K562 (cell line): ENCODE measurements at regions of chr9 and their contacts with region 1.

Region 1: GRCh38 chr9:109903515-109904138 is 123.6 kb downstream of the PALM2AKAP2 start:
- DNase-seq: peak; percentile 50 to 68 (median 64)
- ATAC-seq: peak; percentile 93
- H3K4me3 ChIP-seq: no peak overlapping the region
- H3K27ac ChIP-seq: no peak overlapping the region
- H3K4me1 ChIP-seq: no peaks in the 10 kb centered on the region
- H3K27me3 ChIP-seq: no peaks in the 10 kb centered on the region
- CTCF ChIP-seq: peak; percentile 65 to 80 (median 72)
- EP300 ChIP-seq: no peak
- POLR2A ChIP-seq: no peak
- RAD21 ChIP-seq: peak; percentile 54 to 76

Region 2: GRCh38 chr9:109918339-109919163 is 14.9 kb after region 1 on chr9:
- CTCF ChIA-PET with region 1: no interaction called
- POLR2A ChIA-PET with region 1: no interaction called
- in situ Hi-C with region 1: no loop called
- intact Hi-C with region 1: no loop called
- DNase-seq: no peak
- ATAC-seq: no peak
- H3K4me3 ChIP-seq: no peak overlapping the region
- H3K27ac ChIP-seq: no peak overlapping the region
- H3K4me1 ChIP-seq: no peaks in the 10 kb centered on the region; a peak in 1 of 5 replicates
- H3K27me3 ChIP-seq: no peaks in the 10 kb centered on the region
- CTCF ChIP-seq: no peak
- EP300 ChIP-seq: no peak
- POLR2A ChIP-seq: no peak
- RAD21 ChIP-seq: no peak

Region 3: DNA sequence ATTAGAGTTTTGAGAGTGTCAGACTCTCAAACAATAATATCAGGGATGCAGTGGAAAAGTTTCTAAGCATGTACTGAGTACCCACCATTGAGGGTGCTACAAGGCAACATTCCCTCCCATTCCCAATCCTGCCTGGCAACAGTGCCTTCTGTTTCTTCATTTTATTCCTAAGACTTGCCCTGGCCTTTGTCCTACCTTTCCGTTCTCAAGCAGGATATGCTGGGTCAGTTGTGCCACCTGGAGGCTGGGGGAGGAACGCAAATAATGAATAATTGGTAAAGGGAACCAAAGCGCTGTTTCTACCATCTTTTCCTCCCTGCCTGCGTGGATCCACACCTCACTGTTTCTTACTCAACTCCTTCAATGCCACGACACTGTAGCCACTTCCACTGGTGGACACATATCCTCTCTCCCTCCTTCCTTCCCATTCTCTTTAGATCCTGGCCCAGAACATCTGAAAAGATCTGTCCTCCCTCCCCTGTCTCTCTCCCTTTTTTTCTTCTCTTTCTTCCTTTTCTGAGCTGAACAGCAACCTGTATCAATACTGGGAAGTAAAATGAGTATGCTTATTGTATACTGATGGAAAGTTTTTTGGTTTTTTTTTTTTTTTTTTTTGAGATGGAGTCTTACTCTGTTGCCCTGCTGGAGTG is 154.8 kb after region 1 on chr9:
- CTCF ChIA-PET with region 1: interaction called, 8 read pairs
- POLR2A ChIA-PET with region 1: interaction called, 5 read pairs
- in situ Hi-C with region 1: no loop called
- intact Hi-C with region 1: loop called (anchors 1 kb)
- DNase-seq: peak in 2 of 4 experiments; percentile 33 to 38
- ATAC-seq: peak; percentile 79
- H3K4me3 ChIP-seq: no peak overlapping the region
- H3K27ac ChIP-seq: no peak overlapping the region
- H3K4me1 ChIP-seq: no peaks in the 10 kb centered on the region
- H3K27me3 ChIP-seq: no peaks in the 10 kb centered on the region
- CTCF ChIP-seq: peak; percentile 51 to 63 (median 61); a peak in 5 of 6 replicates
- EP300 ChIP-seq: no peak
- POLR2A ChIP-seq: no peak
- RAD21 ChIP-seq: peak; percentile 39 to 63

Region 4: GRCh38 chr9:110217656-110218099 is 314.1 kb after region 1 on chr9:
- CTCF ChIA-PET with region 1: interaction called, 3 read pairs
- POLR2A ChIA-PET with region 1: no interaction called
- in situ Hi-C with region 1: no loop called
- intact Hi-C with region 1: loop called (anchors 1 kb)
- DNase-seq: peak in 2 of 4 experiments; percentile 24 to 27
- ATAC-seq: peak; percentile 49; the same call in 2 of the 3 replicates
- H3K4me3 ChIP-seq: no peak overlapping the region
- H3K27ac ChIP-seq: no peak overlapping the region
- H3K4me1 ChIP-seq: no peaks in the 10 kb centered on the region; a peak in 1 of 5 replicates
- H3K27me3 ChIP-seq: peaks cover 3 to 18% of the 10 kb centered on the region in 2 experiments; a peak in 3 of 5 replicates
- CTCF ChIP-seq: peak; percentile 48 to 68 (median 65); a peak in 5 of 6 replicates
- EP300 ChIP-seq: no peak
- POLR2A ChIP-seq: no peak
- RAD21 ChIP-seq: peak; percentile 60 to 73